ENCODE measurements at regions of chr2 and their contacts with region 1.

Region 1: DNA sequence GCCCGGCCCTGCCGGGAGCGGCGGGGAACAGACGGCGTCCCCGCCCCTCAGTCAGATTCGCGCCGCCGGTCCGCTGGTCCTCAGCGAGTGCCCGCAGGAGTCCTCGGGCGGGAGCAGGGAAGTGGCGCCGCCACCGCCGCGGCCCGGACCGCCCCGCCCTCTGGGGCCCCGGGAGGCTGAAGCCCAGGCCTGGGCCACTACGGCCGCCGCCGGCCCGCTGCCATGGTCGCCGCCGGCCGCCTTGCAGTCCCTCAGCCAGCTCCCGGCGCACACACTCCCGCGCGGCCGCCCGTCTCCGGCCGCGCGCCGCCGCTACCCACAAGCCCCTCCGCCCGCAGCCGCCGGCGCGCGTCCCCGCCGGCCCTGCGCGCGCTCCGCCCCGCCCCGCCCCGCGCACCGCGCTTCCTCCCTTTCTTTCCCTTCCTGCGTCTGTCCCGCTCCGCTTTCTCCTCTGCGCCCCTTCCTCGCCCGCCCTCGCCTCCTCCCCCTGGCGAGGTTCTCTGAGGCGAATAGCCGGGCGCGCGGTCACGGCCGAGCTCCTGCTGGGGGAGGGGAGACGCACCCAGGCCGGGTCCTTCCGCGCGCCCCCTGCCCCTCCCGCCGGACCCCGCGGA is at the start of gene ROCK2:
- DNase-seq: peak; percentile 92
- H3K4me3 Mint-ChIP-seq: peak within 1 kb of the TSS; percentile 99
- H3K27ac Mint-ChIP-seq: peak within 1 kb of the TSS; percentile 93
- H3K4me1 Mint-ChIP-seq: peaks cover 16% of the 10 kb centered on the region
- H3K27me3 Mint-ChIP-seq: peaks cover 13% of the 10 kb centered on the region
- total RNA-seq, gene ROCK2: 18.4 and 24.4 TPM in 2 replicates

Region 2: DNA sequence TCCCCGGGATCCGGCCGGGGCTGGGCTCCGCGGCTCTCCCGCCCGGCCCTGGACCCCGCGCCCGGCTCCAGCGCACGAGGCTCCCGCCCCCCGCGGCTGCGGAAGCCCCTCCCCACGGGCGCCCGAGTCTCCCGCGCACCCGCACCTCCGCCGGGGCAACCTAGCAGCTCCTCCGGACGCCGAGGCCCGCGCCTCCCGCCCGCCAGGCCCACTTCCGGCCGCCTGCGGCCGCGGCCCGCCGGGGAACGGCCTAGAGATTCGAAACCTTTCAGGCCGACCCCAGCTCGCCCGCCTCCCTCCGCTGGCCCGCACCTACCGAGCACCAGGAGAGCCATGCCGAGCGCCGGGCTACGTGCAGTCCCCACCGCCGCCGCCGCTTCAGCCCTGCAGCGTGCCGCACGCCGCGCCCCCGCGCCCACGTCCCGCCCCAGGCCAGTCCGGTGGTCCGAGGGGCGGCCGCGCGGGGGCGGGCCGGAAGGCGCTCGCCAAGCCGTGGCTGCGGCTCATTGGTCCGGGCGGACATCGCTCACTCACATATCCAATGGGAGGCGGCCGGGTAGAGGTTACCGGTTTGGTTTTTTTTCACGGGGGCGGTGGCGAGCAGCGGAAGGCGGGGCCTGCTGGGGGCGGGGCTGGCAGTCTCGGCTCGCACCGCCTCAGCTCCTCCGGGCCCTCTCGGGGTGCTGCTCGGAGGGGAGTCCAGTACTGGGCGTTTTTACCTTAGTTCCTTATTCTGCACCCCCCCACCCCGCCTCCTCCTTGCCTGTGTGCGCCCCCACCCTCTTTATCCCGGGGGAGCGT is 531.9 kb before region 1 on chr2 and contains the start of gene PDIA6:
- intact Hi-C with region 1: loop called (anchors 10 kb)
- DNase-seq: peak; percentile 99
- H3K4me3 Mint-ChIP-seq: peak within 1 kb of the TSS; percentile 94
- H3K27ac Mint-ChIP-seq: peak within 1 kb of the TSS; percentile 95
- H3K4me1 Mint-ChIP-seq: peaks cover 34% of the 10 kb centered on the region
- H3K27me3 Mint-ChIP-seq: peaks cover 17% of the 10 kb centered on the region
- total RNA-seq, gene PDIA6: 183 and 187 TPM in 2 replicates

Region 3: DNA sequence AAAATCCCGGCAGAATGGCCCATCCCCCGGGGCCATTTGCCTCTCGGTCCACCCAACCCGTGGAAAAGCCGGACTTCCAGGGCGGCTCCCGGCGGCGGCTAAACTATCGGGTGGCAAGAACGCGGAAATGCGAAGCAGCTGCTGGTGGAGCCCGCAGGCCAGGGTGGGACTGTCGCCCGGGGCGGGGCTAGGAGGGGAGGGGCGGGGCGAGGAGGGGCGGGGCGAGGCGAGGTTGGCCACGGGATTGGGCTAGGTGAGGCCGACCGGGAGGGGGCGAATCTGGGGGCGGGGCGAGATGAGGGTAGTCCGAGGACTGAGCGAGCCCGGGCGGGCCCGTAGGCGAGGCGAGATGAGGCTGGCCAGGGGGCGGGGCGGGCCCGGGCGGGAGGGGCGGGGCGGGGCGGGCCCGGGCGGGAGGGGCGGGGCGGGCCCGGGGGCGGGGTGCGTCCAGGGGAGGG is 189.5 kb before region 1 on chr2:
- intact Hi-C with region 1: loop called (anchors 1 kb)
- DNase-seq: peak; percentile 98
- H3K4me3 Mint-ChIP-seq: peak overlapping the region; percentile 86
- H3K27ac Mint-ChIP-seq: peak overlapping the region; percentile 88
- H3K4me1 Mint-ChIP-seq: peaks cover 8% of the 10 kb centered on the region
- H3K27me3 Mint-ChIP-seq: peaks cover 8% of the 10 kb centered on the region

Region 4: GRCh38 chr2:11234309-11234708 is 110.1 kb before region 1 on chr2:
- intact Hi-C with region 1: loop called (anchors 10 kb)
- DNase-seq: no peak
- H3K4me3 Mint-ChIP-seq: no peak overlapping the region
- H3K27ac Mint-ChIP-seq: no peak overlapping the region
- H3K4me1 Mint-ChIP-seq: peaks cover 6% of the 10 kb centered on the region
- H3K27me3 Mint-ChIP-seq: no peaks in the 10 kb centered on the region

Region 5: DNA sequence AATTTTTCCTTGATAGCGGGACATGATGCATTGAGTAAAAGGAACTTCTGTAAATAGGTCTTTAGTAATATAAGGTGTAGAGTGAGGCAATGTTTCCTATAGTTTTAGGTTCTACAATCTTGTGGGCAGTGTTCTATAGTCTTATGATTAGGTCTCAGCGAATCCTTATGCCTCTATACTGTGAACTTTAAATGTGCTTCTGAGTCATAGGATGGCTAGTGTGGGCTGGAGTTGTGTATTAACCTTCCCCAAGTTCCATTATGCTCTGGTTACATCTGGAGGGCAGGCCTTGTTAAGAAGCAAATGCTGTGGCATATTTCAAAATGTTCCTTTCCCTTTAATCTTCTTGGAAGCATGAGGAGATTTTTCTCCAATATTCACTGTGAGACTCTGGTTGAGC is 73.6 kb before region 1 on chr2:
- intact Hi-C with region 1: loop called (anchors 5 kb)
- DNase-seq: no peak
- H3K4me3 Mint-ChIP-seq: no peak overlapping the region
- H3K27ac Mint-ChIP-seq: peak overlapping the region; percentile 23
- H3K4me1 Mint-ChIP-seq: peaks cover 21% of the 10 kb centered on the region
- H3K27me3 Mint-ChIP-seq: no peaks in the 10 kb centered on the region

Region 6: GRCh38 chr2:11465497-11466406 is 121.3 kb after region 1 on chr2 and contains the start of gene E2F6:
- intact Hi-C with region 1: loop called (anchors 5 kb)
- DNase-seq: peak; percentile 96
- H3K4me3 Mint-ChIP-seq: peak within 1 kb of the TSS; percentile 96
- H3K27ac Mint-ChIP-seq: peak within 1 kb of the TSS; percentile 94
- H3K4me1 Mint-ChIP-seq: peaks cover 30% of the 10 kb centered on the region
- H3K27me3 Mint-ChIP-seq: peaks cover 2% of the 10 kb centered on the region
- total RNA-seq, gene E2F6: 20.3 and 22.9 TPM in 2 replicates

Measured in activated CD4-positive, alpha-beta T cell treated with anti-CD3 and anti-CD28 coated beads, Interleukin-2, amount 10 ng/mL, durations not matched to agents 24 days and 14 days (primary cell).